ENCODE measurements at regions of chr4 and their contacts with region 1.

Region 1: GRCh38 chr4:69713593-69713992 is 46.8 kb downstream of the SULT1B1 start:
- DNase-seq: no peak
- H3K4me3 ChIP-seq: no peak overlapping the region
- H3K27ac ChIP-seq: no peak overlapping the region
- H3K4me1 ChIP-seq: peaks cover 11% of the 10 kb centered on the region
- H3K27me3 ChIP-seq: no peaks in the 10 kb centered on the region
- CTCF ChIP-seq: no peak

Region 2: GRCh38 chr4:69816236-69816635 is 102.6 kb after region 1 on chr4:
- dilution Hi-C with region 1: loop called (anchors 10 kb)
- DNase-seq: no peak
- H3K4me3 ChIP-seq: no peak overlapping the region
- H3K27ac ChIP-seq: no peak overlapping the region
- H3K4me1 ChIP-seq: no peaks in the 10 kb centered on the region
- H3K27me3 ChIP-seq: no peaks in the 10 kb centered on the region
- CTCF ChIP-seq: no peak

Region 3: GRCh38 chr4:70041652-70042286 is 328.2 kb after region 1 on chr4:
- dilution Hi-C with region 1: no loop called
- DNase-seq: no peak
- H3K4me3 ChIP-seq: no peak overlapping the region
- H3K27ac ChIP-seq: no peak overlapping the region
- H3K4me1 ChIP-seq: no peaks in the 10 kb centered on the region
- H3K27me3 ChIP-seq: no peaks in the 10 kb centered on the region
- CTCF ChIP-seq: no peak